Adrenal gland (tissue), 19 donors: ENCODE measurements at regions of chr15 and their contacts with region 1.

Region 1: DNA sequence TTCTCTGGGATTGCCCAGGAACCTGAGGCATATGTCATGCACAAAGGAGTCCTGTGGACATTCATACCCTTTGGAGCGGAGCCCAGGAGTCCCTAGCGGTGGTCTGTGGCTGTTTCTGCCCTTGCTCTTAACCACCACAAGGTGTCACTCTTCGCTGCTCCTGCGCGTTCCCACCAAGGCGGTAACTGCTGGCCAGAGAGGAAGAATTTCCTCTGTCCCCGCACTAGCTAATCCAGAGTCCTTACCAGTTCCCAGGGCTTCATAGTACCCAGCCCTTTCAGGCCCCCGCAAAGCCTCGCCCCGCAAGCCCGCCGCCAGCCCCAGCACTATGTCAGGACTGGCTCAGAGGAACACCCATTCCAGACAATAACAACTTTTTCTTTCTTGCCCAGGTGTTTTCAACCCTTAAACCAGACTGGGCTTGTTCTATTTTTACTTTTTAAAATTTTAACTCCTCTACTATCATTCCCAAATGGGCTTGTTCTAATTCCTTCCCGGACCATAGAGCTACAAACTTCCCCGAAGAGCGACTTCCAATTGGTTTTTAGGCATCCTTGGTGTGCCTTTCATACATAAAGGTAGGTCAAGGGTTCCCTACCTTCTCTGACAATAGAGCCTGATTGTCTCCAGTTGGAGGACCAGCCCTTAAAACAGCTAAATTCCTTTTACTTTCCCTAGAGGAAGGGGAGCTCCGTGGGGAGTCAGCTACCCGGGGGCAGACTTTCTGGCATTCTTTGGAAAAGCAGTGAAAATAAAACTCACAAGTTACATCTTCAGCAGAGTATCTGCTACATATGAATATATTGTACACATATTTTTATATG is 31.8 kb upstream of the ZNF774 start:
- DNase-seq: peak; percentile 80 to 94 (median 90)
- H3K4me3 ChIP-seq: no peak overlapping the region
- H3K27ac ChIP-seq: no peak overlapping the region
- H3K4me1 ChIP-seq: peaks cover 10 to 19% of the 10 kb centered on the region in 2 donors
- H3K27me3 ChIP-seq: no peaks in the 10 kb centered on the region
- CTCF ChIP-seq: peak; percentile 96 to 100 (median 100)
- POLR2A ChIP-seq: no peak

Region 2: GRCh38 chr15:90376789-90377188 is 56.5 kb after region 1 on chr15:
- intact Hi-C with region 1: loop called in 1 of 2 experiments (anchors 10 kb)
- DNase-seq: peak in 1 of 7 donors; percentile 45
- H3K4me3 ChIP-seq: no peak overlapping the region
- H3K27ac ChIP-seq: no peak overlapping the region
- H3K4me1 ChIP-seq: no peaks in the 10 kb centered on the region
- H3K27me3 ChIP-seq: no peaks in the 10 kb centered on the region
- CTCF ChIP-seq: no peak
- POLR2A ChIP-seq: no peak

Region 3: DNA sequence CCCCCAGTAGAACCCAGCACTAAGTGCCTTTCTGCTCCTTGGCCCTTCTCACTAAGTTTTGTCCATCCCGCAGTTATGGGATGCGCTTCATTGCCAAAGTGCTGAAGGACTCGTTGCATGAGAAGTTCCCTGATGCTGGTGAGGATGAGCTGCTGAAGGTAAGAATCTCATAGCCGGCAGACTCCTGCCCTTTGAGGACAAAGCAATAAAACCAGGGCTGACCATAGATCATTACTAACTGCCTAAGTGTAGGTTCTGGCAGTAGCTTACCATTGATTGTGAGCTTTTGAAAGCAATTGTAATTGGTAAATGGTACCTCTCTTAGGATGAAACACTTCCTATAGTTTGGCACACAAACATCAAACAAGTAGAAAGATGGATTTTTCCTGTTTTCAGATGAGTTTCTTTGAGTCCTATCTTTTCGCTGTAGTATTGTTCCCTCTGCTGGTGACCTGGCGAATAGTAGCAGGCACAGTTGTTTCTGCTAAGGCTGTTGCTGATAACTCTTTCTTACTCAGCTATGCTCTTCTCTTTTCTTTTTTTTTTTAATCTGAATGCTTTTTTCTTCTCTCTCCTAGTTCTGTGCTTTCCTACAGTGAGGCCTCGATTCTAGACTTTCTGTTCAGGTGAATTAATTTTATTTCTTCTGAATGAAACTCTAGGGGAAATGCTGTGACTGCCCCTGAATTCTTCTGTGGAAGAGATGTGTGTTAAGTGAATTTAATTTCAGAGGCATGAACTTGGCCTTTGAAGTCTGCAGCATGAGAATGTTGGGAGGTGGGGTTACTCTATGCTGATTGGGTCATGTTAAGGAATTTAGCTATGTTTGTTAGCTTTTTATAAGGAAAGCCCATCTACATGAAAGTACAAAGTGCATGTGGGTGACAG is 162.1 kb after region 1 on chr15:
- intact Hi-C with region 1: loop called (anchors 5 to 10 kb)
- DNase-seq: peak; percentile 32 to 87 (median 55)
- H3K4me3 ChIP-seq: no peak overlapping the region
- H3K27ac ChIP-seq: no peak overlapping the region
- H3K4me1 ChIP-seq: no peaks in the 10 kb centered on the region
- H3K27me3 ChIP-seq: no peaks in the 10 kb centered on the region
- CTCF ChIP-seq: peak; percentile 58 to 92 (median 84)
- POLR2A ChIP-seq: no peak

Region 4: GRCh38 chr15:90603893-90604292 is 283.6 kb after region 1 on chr15:
- intact Hi-C with region 1: loop called in 1 of 2 experiments (anchors 10 kb)
- DNase-seq: peak in 5 of 7 donors; percentile 40 to 67 (median 49)
- H3K4me3 ChIP-seq: no peak overlapping the region
- H3K27ac ChIP-seq: no peak overlapping the region
- H3K4me1 ChIP-seq: no peaks in the 10 kb centered on the region
- H3K27me3 ChIP-seq: no peaks in the 10 kb centered on the region
- CTCF ChIP-seq: peak; percentile 13 to 50 (median 36)
- POLR2A ChIP-seq: no peak